ENCODE measurements at regions of chr9 and their contacts with region 1.

Region 1: GRCh38 chr9:128863647-128864046 is 18.1 kb downstream of the KYAT1 start:
- DNase-seq: peak; percentile 13
- ATAC-seq: peak; percentile 100
- H3K4me3 ChIP-seq: no peak overlapping the region
- H3K27ac ChIP-seq: no peak overlapping the region
- H3K4me1 ChIP-seq: no peaks in the 10 kb centered on the region
- H3K27me3 ChIP-seq: no peaks in the 10 kb centered on the region
- CTCF ChIP-seq: peak; percentile 94 to 98 (median 95)
- EP300 ChIP-seq: no peak
- POLR2A ChIP-seq: no peak
- RAD21 ChIP-seq: peak; percentile 77

Region 2: GRCh38 chr9:128875790-128876160 is 12.1 kb after region 1 on chr9:
- CTCF ChIA-PET with region 1: interaction called, 17 read pairs
- POLR2A ChIA-PET with region 1: interaction called, 3 read pairs
- RAD21 ChIA-PET with region 1: interaction called, 5 read pairs
- SMC1A ChIA-PET with region 1: interaction called, 3 read pairs
- in situ Hi-C with region 1: no loop called
- intact Hi-C with region 1: no loop called
- DNase-seq: no peak
- ATAC-seq: no peak
- H3K4me3 ChIP-seq: no peak overlapping the region
- H3K27ac ChIP-seq: no peak overlapping the region
- H3K4me1 ChIP-seq: no peaks in the 10 kb centered on the region
- H3K27me3 ChIP-seq: no peaks in the 10 kb centered on the region
- CTCF ChIP-seq: no peak
- EP300 ChIP-seq: no peak
- POLR2A ChIP-seq: no peak
- RAD21 ChIP-seq: no peak

Region 3: GRCh38 chr9:128940271-128940921 is 76.7 kb after region 1 on chr9:
- CTCF ChIA-PET with region 1: no interaction called
- POLR2A ChIA-PET with region 1: no interaction called
- RAD21 ChIA-PET with region 1: no interaction called
- SMC1A ChIA-PET with region 1: no interaction called
- in situ Hi-C with region 1: no loop called
- intact Hi-C with region 1: no loop called
- DNase-seq: no peak
- ATAC-seq: no peak
- H3K4me3 ChIP-seq: no peak overlapping the region
- H3K27ac ChIP-seq: no peak overlapping the region
- H3K4me1 ChIP-seq: no peaks in the 10 kb centered on the region
- H3K27me3 ChIP-seq: no peaks in the 10 kb centered on the region
- CTCF ChIP-seq: no peak
- EP300 ChIP-seq: no peak
- POLR2A ChIP-seq: no peak
- RAD21 ChIP-seq: no peak